A673 (cell line): ENCODE measurements at regions of chr12 and their contacts with region 1.

Region 1: GRCh38 chr12:52004042-52004648 is 2.6 kb upstream of the TAMALIN start:
- DNase-seq: peak; percentile 77
- H3K4me3 ChIP-seq: no peak overlapping the region
- H3K27ac ChIP-seq: no peak overlapping the region
- H3K4me1 ChIP-seq: peaks cover 7% of the 10 kb centered on the region
- H3K27me3 ChIP-seq: no peaks in the 10 kb centered on the region
- CTCF ChIP-seq: peak; percentile 74

Region 2: GRCh38 chr12:50038336-50038735 is 1965.8 kb before region 1 on chr12:
- CTCF ChIA-PET with region 1: no interaction called
- POLR2A ChIA-PET with region 1: interaction called, 23 read pairs
- intact Hi-C with region 1: no loop called
- DNase-seq: no peak
- H3K4me3 ChIP-seq: no peak overlapping the region
- H3K27ac ChIP-seq: no peak overlapping the region
- H3K4me1 ChIP-seq: no peaks in the 10 kb centered on the region
- H3K27me3 ChIP-seq: no peaks in the 10 kb centered on the region
- CTCF ChIP-seq: no peak

Region 3: DNA sequence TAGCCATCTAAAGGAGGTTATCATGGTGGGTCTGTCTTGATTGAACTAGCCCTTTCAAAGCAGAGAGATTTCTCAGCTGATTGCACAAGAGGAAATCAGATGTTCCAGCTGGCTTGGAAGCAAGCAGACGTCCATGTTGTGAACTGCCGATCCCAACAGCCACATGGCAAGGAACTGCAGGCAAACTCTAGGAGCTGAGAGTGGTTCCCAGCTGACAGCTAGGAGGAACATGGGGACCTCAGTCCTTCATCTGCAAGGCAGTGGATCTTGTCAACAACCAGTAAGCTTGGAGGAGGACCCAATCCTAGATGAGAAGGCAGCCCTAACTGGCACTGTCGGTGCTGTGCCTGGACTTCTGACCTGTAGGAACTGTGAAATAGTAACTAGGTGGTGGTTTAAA is 44.9 kb before region 1 on chr12:
- CTCF ChIA-PET with region 1: no interaction called
- POLR2A ChIA-PET with region 1: no interaction called
- intact Hi-C with region 1: no loop called
- DNase-seq: no peak
- H3K4me3 ChIP-seq: no peak overlapping the region
- H3K27ac ChIP-seq: peak overlapping the region; percentile 22
- H3K4me1 ChIP-seq: peaks cover 9% of the 10 kb centered on the region
- H3K27me3 ChIP-seq: no peaks in the 10 kb centered on the region
- CTCF ChIP-seq: no peak

Region 4: GRCh38 chr12:52121824-52122539 is 117.8 kb after region 1 on chr12:
- CTCF ChIA-PET with region 1: interaction called, 3 read pairs
- POLR2A ChIA-PET with region 1: no interaction called
- intact Hi-C with region 1: loop called (anchors 5 kb)
- DNase-seq: peak; percentile 81
- H3K4me3 ChIP-seq: no peak overlapping the region
- H3K27ac ChIP-seq: no peak overlapping the region
- H3K4me1 ChIP-seq: peaks cover 8% of the 10 kb centered on the region
- H3K27me3 ChIP-seq: no peaks in the 10 kb centered on the region
- CTCF ChIP-seq: peak; percentile 86